IMR-90 (cell line): ENCODE measurements at regions of chr1 and their contacts with region 1.

Region 1: DNA sequence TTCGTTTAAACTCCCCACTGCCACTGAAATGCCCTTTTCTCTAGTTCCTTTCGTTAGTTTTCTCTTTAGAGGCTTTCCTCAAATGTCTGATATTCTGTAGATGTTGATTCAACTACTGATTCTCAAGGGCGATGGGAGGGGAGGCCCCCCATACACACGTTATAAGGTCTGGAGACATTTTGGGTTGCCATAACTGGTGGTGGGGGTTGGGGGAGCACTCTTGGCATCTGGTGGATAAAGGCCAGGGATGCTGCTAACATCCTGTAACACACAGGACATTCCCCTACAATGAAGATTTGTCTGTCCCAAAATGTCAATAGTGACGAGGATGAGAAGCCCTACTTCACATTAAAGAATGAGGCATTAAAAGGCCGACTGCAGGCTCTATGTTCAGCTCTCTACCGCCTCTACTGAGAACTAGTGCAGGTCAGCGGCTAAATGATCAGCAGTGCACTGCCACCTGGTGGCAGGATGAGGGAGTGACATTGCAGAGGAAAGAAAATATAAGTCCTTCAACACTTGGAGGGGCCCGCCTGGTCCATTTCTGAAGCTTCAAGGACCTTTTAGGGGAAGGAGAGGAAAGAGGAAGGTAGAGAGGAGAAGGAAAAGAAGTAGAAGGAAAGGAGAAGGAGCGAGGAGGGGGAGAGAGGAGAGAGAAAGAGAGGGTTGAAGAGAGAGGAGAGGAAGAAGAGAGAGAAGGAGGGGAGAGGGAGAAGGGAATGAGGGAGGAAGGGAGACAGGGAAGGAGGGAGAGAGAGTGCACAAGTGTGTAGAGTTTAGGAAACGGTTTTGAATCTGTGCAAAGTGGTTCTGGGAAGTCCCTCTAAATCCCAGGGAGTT is 29.4 kb downstream of the ALG14 start:
- DNase-seq: peak; percentile 86
- ATAC-seq: peak; percentile 90
- H3K4me3 ChIP-seq: no peak overlapping the region
- H3K27ac ChIP-seq: no peak overlapping the region
- H3K4me1 ChIP-seq: peaks cover 5% of the 10 kb centered on the region
- H3K27me3 ChIP-seq: no peaks in the 10 kb centered on the region
- CTCF ChIP-seq: peak; percentile 100
- POLR2A ChIP-seq: no peak
- RAD21 ChIP-seq: peak; percentile 97

Region 2: GRCh38 chr1:94481473-94481933 is 561.9 kb before region 1 on chr1:
- CTCF ChIA-PET with region 1: no interaction called
- POLR2A ChIA-PET with region 1: no interaction called
- dilution Hi-C with region 1: no loop called
- in situ Hi-C with region 1: no loop called
- intact Hi-C with region 1: loop called (anchors 5 kb)
- DNase-seq: peak; percentile 74
- ATAC-seq: peak; percentile 98
- H3K4me3 ChIP-seq: no peak overlapping the region
- H3K27ac ChIP-seq: no peak overlapping the region
- H3K4me1 ChIP-seq: no peaks in the 10 kb centered on the region
- H3K27me3 ChIP-seq: no peaks in the 10 kb centered on the region
- CTCF ChIP-seq: peak; percentile 78
- POLR2A ChIP-seq: no peak
- RAD21 ChIP-seq: peak; percentile 73

Region 3: GRCh38 chr1:94522304-94522703 is 521.1 kb before region 1 on chr1:
- CTCF ChIA-PET with region 1: no interaction called
- POLR2A ChIA-PET with region 1: no interaction called
- dilution Hi-C with region 1: no loop called
- in situ Hi-C with region 1: loop called (anchors 5 kb)
- intact Hi-C with region 1: loop called (anchors 5 kb)
- DNase-seq: peak; percentile 72
- ATAC-seq: peak; percentile 46
- H3K4me3 ChIP-seq: no peak overlapping the region
- H3K27ac ChIP-seq: no peak overlapping the region
- H3K4me1 ChIP-seq: peaks cover 3% of the 10 kb centered on the region; the same call in 1 of the 2 replicates
- H3K27me3 ChIP-seq: no peaks in the 10 kb centered on the region
- CTCF ChIP-seq: peak; percentile 73
- POLR2A ChIP-seq: no peak
- RAD21 ChIP-seq: peak; percentile 82

Region 4: GRCh38 chr1:94527447-94528031 is 515.8 kb before region 1 on chr1:
- CTCF ChIA-PET with region 1: no interaction called
- POLR2A ChIA-PET with region 1: no interaction called
- dilution Hi-C with region 1: no loop called
- in situ Hi-C with region 1: loop called (anchors 5 kb)
- intact Hi-C with region 1: loop called (anchors 5 kb)
- DNase-seq: peak; percentile 62
- ATAC-seq: peak; percentile 31
- H3K4me3 ChIP-seq: no peak overlapping the region
- H3K27ac ChIP-seq: no peak overlapping the region
- H3K4me1 ChIP-seq: 0 out of 2 replicates have a peak, but pooled peaks cover 1% of the 10 kb centered on the region
- H3K27me3 ChIP-seq: no peaks in the 10 kb centered on the region
- CTCF ChIP-seq: 0 out of 2 replicates have a peak, but pooled peaks have one; percentile 15
- POLR2A ChIP-seq: no peak
- RAD21 ChIP-seq: peak; percentile 11; the same call in 1 of the 2 replicates

Region 5: GRCh38 chr1:94854458-94855306 is 188.7 kb before region 1 on chr1:
- CTCF ChIA-PET with region 1: interaction called, 35 read pairs
- POLR2A ChIA-PET with region 1: interaction called, 3 read pairs
- dilution Hi-C with region 1: no loop called
- in situ Hi-C with region 1: loop called (anchors 5 kb)
- intact Hi-C with region 1: loop called (anchors 1 kb)
- DNase-seq: peak; percentile 92
- ATAC-seq: peak; percentile 96
- H3K4me3 ChIP-seq: peak overlapping the region; percentile 41
- H3K27ac ChIP-seq: peak overlapping the region; percentile 38
- H3K4me1 ChIP-seq: peaks cover 5% of the 10 kb centered on the region
- H3K27me3 ChIP-seq: no peaks in the 10 kb centered on the region
- CTCF ChIP-seq: peak; percentile 97
- POLR2A ChIP-seq: peak; percentile 54; the same call in 1 of the 2 replicates
- RAD21 ChIP-seq: peak; percentile 97

Region 6: DNA sequence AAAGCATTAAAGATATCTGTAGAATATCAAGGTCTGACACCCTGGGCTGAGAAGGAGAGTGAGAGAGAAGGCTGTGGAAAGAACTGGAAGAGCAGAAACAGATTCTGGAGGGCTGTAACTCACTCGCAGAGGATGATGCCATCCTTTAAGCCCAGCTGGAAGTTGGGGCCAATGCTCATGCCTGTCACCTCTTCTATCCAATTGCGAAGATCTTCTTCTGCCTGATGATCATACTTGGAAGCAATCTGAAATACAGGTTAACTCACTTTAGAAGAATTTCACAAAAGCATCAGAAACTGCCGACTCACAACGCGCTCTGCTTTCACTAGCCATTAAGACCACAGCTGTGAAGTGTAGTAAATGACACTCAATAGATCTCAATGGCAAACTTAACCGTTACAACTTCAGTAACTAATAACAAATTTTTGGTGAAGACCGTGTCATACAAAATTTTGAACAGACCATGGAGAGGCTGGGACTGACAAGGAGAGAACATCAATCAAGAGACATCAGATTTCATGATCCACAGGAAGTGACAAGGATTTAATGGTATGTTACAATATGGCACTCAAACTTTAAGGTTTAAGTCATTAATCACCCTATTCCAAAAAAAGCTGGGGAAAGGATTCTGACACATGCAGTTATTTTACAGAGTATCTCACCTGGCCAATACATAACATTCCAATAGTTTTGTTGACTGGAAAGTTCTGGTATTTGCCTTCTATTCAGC is 139.9 kb before region 1 on chr1:
- CTCF ChIA-PET with region 1: interaction called, 8 read pairs
- POLR2A ChIA-PET with region 1: no interaction called
- dilution Hi-C with region 1: no loop called
- in situ Hi-C with region 1: no loop called
- intact Hi-C with region 1: loop called (anchors 1 kb)
- DNase-seq: peak; percentile 49
- ATAC-seq: no peak
- H3K4me3 ChIP-seq: no peak overlapping the region
- H3K27ac ChIP-seq: peak overlapping the region; percentile 39; the same call in 1 of the 2 replicates
- H3K4me1 ChIP-seq: peaks cover 26% of the 10 kb centered on the region
- H3K27me3 ChIP-seq: no peaks in the 10 kb centered on the region
- CTCF ChIP-seq: no peak
- POLR2A ChIP-seq: no peak
- RAD21 ChIP-seq: no peak

Region 7: GRCh38 chr1:94926915-94927404 is 116.4 kb before region 1 on chr1 and contains the start of gene CNN3:
- CTCF ChIA-PET with region 1: interaction called, 7 read pairs
- POLR2A ChIA-PET with region 1: interaction called, 3 read pairs
- dilution Hi-C with region 1: no loop called
- in situ Hi-C with region 1: loop called (anchors 5 kb)
- intact Hi-C with region 1: loop called (anchors 1 kb)
- DNase-seq: peak; percentile 92
- ATAC-seq: peak; percentile 91
- H3K4me3 ChIP-seq: peak within 1 kb of the TSS; percentile 63
- H3K27ac ChIP-seq: peak within 1 kb of the TSS; percentile 93
- H3K4me1 ChIP-seq: peaks cover 23% of the 10 kb centered on the region
- H3K27me3 ChIP-seq: no peaks in the 10 kb centered on the region
- CTCF ChIP-seq: peak; percentile 9; the same call in 1 of the 2 replicates
- POLR2A ChIP-seq: peak; percentile 97
- RAD21 ChIP-seq: peak; percentile 17; the same call in 1 of the 2 replicates
- total RNA-seq, gene CNN3: 552 and 592 TPM in 2 replicates

Region 8: GRCh38 chr1:95323123-95323522 is 279.8 kb after region 1 on chr1:
- CTCF ChIA-PET with region 1: no interaction called
- POLR2A ChIA-PET with region 1: no interaction called
- dilution Hi-C with region 1: no loop called
- in situ Hi-C with region 1: no loop called
- intact Hi-C with region 1: no loop called
- DNase-seq: no peak
- ATAC-seq: no peak
- H3K4me3 ChIP-seq: no peak overlapping the region
- H3K27ac ChIP-seq: no peak overlapping the region
- H3K4me1 ChIP-seq: no peaks in the 10 kb centered on the region
- H3K27me3 ChIP-seq: peaks cover 2% of the 10 kb centered on the region; the same call in 1 of the 2 replicates
- CTCF ChIP-seq: no peak
- POLR2A ChIP-seq: no peak
- RAD21 ChIP-seq: no peak